ENCODE measurements at regions of chr11 and their contacts with region 1.

Region 1: DNA sequence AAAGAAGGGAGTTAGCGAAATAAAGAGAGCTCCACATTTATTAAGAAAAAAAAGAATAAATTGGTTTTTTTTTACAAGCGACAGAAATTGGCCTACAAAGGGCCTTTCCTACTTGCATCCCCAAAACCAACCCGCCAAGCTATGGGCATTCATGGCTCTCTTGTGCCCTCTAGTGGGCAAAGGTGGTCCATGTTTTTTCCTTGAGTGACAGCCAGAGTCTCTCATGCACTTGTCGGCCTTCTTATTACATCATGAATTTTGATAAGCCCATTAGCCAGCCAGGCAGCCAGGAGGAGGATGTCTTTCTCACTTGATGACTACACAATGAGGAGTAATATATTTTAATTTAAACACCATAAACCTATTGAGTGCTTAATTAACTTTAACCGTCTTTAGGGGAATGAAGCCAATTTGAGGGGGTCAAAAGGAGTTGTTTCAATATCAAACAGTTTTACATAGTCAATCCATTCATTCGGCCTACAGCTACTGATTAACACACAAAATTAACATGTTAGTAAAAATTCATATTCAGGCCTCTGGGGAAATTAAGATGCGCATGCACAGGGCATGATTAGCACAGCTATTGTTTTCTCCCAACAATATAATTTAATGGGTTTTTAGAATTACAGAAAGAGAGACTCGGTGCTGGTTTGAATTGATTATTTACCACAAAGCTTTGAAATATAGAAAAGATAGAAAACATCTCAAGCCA is 85.5 kb downstream of the RCN1 start:
- DNase-seq: peak in 2 of 3 donors; percentile 38 to 75
- ATAC-seq: peak; percentile 85 to 93 (median 90)
- H3K4me3 ChIP-seq: no peak overlapping the region
- H3K27ac ChIP-seq: no peak overlapping the region
- H3K4me1 ChIP-seq: no peaks in the 10 kb centered on the region
- H3K27me3 ChIP-seq: no peaks in the 10 kb centered on the region
- CTCF ChIP-seq: peak; percentile 85 to 94 (median 93)
- POLR2A ChIP-seq: no peak

Region 2: DNA sequence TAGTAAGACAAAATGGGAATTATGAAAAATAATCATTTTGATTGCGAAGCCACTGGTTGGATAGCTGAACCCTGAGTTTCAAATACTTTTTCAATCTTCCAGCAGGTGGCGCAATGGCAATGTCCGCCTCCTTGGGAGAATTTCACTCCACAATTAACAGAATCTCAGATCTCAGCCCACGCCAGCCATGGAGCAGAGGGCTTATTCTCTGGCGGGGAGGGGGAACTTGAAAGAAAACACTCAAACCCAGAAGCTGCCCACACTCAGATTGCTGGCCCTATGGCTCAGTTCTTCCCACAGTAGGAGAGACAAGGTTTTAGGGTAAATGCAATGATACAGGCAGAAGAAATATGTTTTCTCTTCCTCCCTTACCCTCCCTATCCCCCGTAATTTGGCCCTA is 124.2 kb before region 1 on chr11:
- intact Hi-C with region 1: loop called (anchors 2 to 5 kb)
- DNase-seq: peak in 2 of 3 donors; percentile 32 to 53
- ATAC-seq: peak; percentile 68 to 77 (median 76)
- H3K4me3 ChIP-seq: no peak overlapping the region
- H3K27ac ChIP-seq: no peak overlapping the region
- H3K4me1 ChIP-seq: no peaks in the 10 kb centered on the region
- H3K27me3 ChIP-seq: no peaks in the 10 kb centered on the region
- CTCF ChIP-seq: peak; percentile 72 to 80 (median 76)
- POLR2A ChIP-seq: no peak

Region 3: DNA sequence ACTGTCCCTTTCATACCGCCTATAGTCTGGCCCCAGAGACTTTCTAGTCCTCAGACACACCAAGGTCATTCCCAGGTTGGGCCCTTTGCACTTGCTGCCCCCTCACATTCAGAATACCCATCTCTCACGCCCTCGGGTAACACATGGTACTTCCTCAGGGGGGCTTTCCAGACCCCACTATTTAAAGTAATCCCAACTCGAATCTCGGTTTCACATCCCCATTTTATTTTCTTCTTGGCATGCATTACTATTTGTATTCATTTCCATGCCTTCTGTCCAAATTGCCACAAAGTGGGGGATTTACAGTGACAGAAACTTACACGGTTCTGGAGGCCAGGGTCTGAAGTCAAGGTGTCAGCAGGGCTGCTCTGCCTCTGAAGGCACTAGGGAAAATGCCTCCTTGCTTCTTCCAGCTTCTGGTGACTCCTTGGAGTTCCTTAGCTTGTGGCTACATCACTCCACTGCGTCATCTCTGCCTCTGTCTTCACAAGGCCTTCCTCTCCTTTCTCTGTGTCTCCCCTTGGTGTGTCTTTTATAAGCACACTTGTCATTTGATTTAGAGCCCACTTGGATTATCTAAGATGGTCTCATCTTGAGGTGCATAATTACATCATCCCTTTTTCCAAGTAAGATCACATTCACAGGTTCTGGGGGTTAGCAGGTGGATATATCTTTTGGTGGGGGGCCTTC is 70.4 kb before region 1 on chr11:
- intact Hi-C with region 1: no loop called
- DNase-seq: no peak
- ATAC-seq: no peak
- H3K4me3 ChIP-seq: no peak overlapping the region
- H3K27ac ChIP-seq: no peak overlapping the region
- H3K4me1 ChIP-seq: peaks cover 0 to 20% (median 2%) of the 10 kb centered on the region in 4 donors
- H3K27me3 ChIP-seq: no peaks in the 10 kb centered on the region
- CTCF ChIP-seq: no peak
- POLR2A ChIP-seq: no peak

Region 4: DNA sequence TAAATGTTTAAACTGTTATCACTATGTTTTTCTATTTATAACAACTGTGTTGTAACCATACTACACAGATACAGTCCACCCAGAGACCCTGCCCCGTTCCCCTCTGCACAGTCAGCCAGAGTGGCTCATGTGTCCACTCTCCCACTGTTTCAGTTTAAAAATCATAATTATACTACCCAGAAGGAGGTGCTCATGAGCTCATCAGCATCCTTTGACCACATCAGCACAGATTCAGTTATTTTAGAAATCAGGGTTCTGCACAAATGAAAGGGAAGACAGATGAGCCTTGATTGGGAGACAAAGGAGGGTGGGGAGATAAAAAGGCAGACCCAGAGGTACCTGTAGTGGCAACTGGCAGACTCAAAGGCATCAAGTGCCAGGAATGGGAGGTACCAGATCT is 38.8 kb after region 1 on chr11:
- intact Hi-C with region 1: no loop called
- DNase-seq: no peak
- ATAC-seq: no peak
- H3K4me3 ChIP-seq: no peak overlapping the region
- H3K27ac ChIP-seq: no peak overlapping the region
- H3K4me1 ChIP-seq: no peaks in the 10 kb centered on the region
- H3K27me3 ChIP-seq: no peaks in the 10 kb centered on the region
- CTCF ChIP-seq: no peak
- POLR2A ChIP-seq: no peak

Region 5: GRCh38 chr11:32225571-32226285 is 49.3 kb after region 1 on chr11:
- intact Hi-C with region 1: no loop called
- DNase-seq: no peak
- ATAC-seq: no peak
- H3K4me3 ChIP-seq: no peak overlapping the region
- H3K27ac ChIP-seq: no peak overlapping the region
- H3K4me1 ChIP-seq: no peaks in the 10 kb centered on the region
- H3K27me3 ChIP-seq: no peaks in the 10 kb centered on the region
- CTCF ChIP-seq: no peak
- POLR2A ChIP-seq: no peak